Naive thymus-derived CD4-positive, alpha-beta T cell (primary cell): ENCODE measurements at regions of chr2 and their contacts with region 1.

Region 1: GRCh38 chr2:64730551-64731262 is 77.0 kb upstream of the SERTAD2 start:
- DNase-seq: peak in 8 of 9 donors; percentile 41 to 72 (median 51)
- ATAC-seq: peak; percentile 80
- H3K4me3 ChIP-seq: peak overlapping the region; percentile 66
- H3K4me3 Mint-ChIP-seq: peak overlapping the region; percentile 80 to 95 (median 88)
- H3K27ac ChIP-seq: peak overlapping the region; percentile 71
- H3K27ac Mint-ChIP-seq: peak overlapping the region; percentile 95 to 99 (median 98)
- H3K4me1 ChIP-seq: peaks cover 31 to 32% of the 10 kb centered on the region in 2 donors
- H3K4me1 Mint-ChIP-seq: peaks cover 26 to 80% (median 71%) of the 10 kb centered on the region in 7 donors
- H3K27me3 ChIP-seq: no peaks in the 10 kb centered on the region
- H3K27me3 Mint-ChIP-seq: no peaks in the 10 kb centered on the region

Region 2: GRCh38 chr2:64666810-64667438 is 63.8 kb before region 1 on chr2:
- CTCF ChIA-PET with region 1: interaction called, 6 read pairs
- POLR2A ChIA-PET with region 1: interaction called, 29 read pairs
- intact Hi-C with region 1: no loop called
- DNase-seq: peak in 3 of 9 donors; percentile 43 to 51 (median 51)
- ATAC-seq: peak; percentile 61
- H3K4me3 ChIP-seq: peak overlapping the region; percentile 12
- H3K4me3 Mint-ChIP-seq: peak overlapping the region in 9 of 10 donors; percentile 3 to 76 (median 64)
- H3K27ac ChIP-seq: peak overlapping the region; percentile 58
- H3K27ac Mint-ChIP-seq: peak overlapping the region in 3 of 9 donors; percentile 71 to 91 (median 85)
- H3K4me1 ChIP-seq: peaks cover 15 to 55% of the 10 kb centered on the region in 2 donors
- H3K4me1 Mint-ChIP-seq: peaks cover 28 to 46% (median 35%) of the 10 kb centered on the region in 7 donors
- H3K27me3 ChIP-seq: no peaks in the 10 kb centered on the region
- H3K27me3 Mint-ChIP-seq: no peaks in the 10 kb centered on the region

Region 3: GRCh38 chr2:64698668-64699444 is 31.9 kb before region 1 on chr2:
- CTCF ChIA-PET with region 1: no interaction called
- POLR2A ChIA-PET with region 1: interaction called, 10 read pairs
- intact Hi-C with region 1: loop called in 1 of 2 experiments (anchors 1 kb)
- DNase-seq: no peak
- ATAC-seq: peak; percentile 76
- H3K4me3 ChIP-seq: no peak overlapping the region
- H3K4me3 Mint-ChIP-seq: peak overlapping the region in 1 of 10 donors; percentile 80
- H3K27ac ChIP-seq: no peak overlapping the region
- H3K27ac Mint-ChIP-seq: peak overlapping the region in 4 of 9 donors; percentile 2 to 79 (median 36)
- H3K4me1 ChIP-seq: peaks cover 8 to 12% of the 10 kb centered on the region in 2 donors
- H3K4me1 Mint-ChIP-seq: peaks cover 21 to 59% (median 41%) of the 10 kb centered on the region in 7 donors
- H3K27me3 ChIP-seq: no peaks in the 10 kb centered on the region
- H3K27me3 Mint-ChIP-seq: no peaks in the 10 kb centered on the region

Region 4: DNA sequence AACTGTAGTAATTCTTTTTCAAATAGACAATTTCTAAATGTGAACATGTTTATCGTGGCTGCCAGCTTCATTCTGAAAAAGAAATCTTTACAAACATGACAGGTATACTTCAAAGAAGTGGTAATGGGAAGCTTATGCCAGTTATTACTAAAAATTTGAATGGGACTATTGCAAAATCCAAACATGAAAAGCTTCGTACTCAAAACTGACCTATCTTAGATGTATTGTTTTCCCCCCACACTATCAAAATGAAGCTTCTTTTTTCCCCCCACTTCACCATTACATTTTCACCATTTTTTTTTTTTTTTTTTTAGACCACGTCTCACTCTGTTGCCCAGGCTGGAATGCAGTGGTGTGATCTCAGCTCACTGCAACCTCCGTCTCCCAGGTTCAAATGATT is 26.5 kb before region 1 on chr2:
- CTCF ChIA-PET with region 1: no interaction called
- POLR2A ChIA-PET with region 1: interaction called, 10 read pairs
- intact Hi-C with region 1: no loop called
- DNase-seq: no peak
- ATAC-seq: no peak
- H3K4me3 ChIP-seq: no peak overlapping the region
- H3K4me3 Mint-ChIP-seq: no peak overlapping the region
- H3K27ac ChIP-seq: no peak overlapping the region
- H3K27ac Mint-ChIP-seq: no peak overlapping the region
- H3K4me1 ChIP-seq: peaks cover 0 to 5% of the 10 kb centered on the region in 2 donors
- H3K4me1 Mint-ChIP-seq: peaks cover 9 to 24% (median 12%) of the 10 kb centered on the region in 7 donors
- H3K27me3 ChIP-seq: no peaks in the 10 kb centered on the region
- H3K27me3 Mint-ChIP-seq: no peaks in the 10 kb centered on the region

Region 5: DNA sequence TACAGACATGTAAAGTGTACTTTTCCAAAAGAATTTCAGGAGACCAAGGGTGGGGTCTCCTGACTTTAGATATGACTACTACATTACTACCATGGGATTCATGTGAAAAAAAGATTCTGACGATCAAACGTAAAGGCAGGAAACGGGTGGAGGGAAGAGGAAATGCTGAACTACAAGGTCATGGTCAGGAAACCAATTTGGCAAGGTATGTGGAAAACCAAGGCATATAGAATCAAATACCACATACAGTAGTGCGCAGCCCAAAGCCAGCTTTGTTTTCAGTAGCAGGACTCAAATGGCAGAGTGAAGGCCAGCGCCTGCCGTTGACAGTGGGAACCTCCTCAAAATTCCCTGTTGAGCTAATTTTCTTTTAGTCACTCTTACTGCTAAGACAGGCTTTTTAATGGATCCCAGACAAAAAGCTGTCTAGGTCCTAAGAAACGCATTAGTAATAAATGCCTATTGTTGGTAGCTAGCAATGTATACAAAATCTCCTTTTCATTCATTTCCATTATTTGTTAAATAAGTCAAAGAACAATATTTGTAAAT is 19.4 kb before region 1 on chr2:
- CTCF ChIA-PET with region 1: interaction called, 4 read pairs
- POLR2A ChIA-PET with region 1: interaction called, 16 read pairs
- intact Hi-C with region 1: no loop called
- DNase-seq: peak in 5 of 9 donors; percentile 3 to 19 (median 12)
- ATAC-seq: no peak
- H3K4me3 ChIP-seq: no peak overlapping the region
- H3K4me3 Mint-ChIP-seq: peak overlapping the region; percentile 22 to 80 (median 68)
- H3K27ac ChIP-seq: no peak overlapping the region
- H3K27ac Mint-ChIP-seq: peak overlapping the region in 6 of 9 donors; percentile 5 to 76 (median 12)
- H3K4me1 ChIP-seq: peaks cover 5 to 15% of the 10 kb centered on the region in 2 donors
- H3K4me1 Mint-ChIP-seq: peaks cover 17 to 33% (median 19%) of the 10 kb centered on the region in 7 donors
- H3K27me3 ChIP-seq: no peaks in the 10 kb centered on the region
- H3K27me3 Mint-ChIP-seq: no peaks in the 10 kb centered on the region

Region 6: DNA sequence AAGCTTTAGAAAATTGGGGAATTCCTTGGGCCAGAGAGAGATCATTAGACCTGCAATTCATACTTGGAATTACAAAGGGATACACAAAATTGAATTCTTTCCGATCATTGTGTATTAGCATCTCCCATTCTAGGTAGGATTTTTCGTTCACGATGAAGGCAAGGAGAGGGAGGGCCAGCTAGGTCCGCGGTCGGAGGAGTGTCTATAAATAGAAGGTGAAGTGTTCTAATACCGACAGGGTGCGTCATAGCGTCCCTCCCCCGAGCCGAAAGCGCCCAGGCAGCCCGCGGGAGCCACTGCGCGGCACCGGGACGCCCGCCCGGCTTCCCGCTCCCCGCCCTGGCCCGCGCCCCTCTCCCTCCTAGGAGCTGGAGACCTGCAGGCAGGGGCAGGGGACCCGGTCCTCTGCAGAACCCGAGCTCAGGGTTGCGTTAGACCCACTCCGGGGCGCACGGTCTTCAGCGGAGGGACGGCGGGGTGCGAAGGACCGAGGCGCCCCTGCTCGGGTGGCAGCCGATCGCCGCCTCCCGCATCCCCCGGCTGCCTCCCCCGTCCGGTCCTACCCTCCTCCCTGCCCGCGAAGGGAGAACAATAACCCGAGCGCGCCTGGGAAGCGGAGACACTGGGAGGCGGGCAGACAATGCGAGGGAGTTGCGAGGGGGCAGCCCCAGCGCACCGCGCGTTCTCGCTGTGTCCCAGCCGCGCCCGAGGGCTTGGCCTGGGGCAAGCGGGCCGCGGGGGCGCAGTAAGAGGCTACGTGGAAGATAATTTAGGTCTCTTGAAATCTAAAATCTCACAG is 37.2 kb after region 1 on chr2:
- CTCF ChIA-PET with region 1: interaction called, 3 read pairs
- POLR2A ChIA-PET with region 1: interaction called, 4 read pairs
- intact Hi-C with region 1: loop called (anchors 1 kb)
- DNase-seq: peak; percentile 35 to 78 (median 55)
- ATAC-seq: peak; percentile 89
- H3K4me3 ChIP-seq: peak overlapping the region; percentile 80
- H3K4me3 Mint-ChIP-seq: peak overlapping the region; percentile 90 to 99 (median 96)
- H3K27ac ChIP-seq: peak overlapping the region; percentile 73
- H3K27ac Mint-ChIP-seq: peak overlapping the region; percentile 92 to 97 (median 95)
- H3K4me1 ChIP-seq: peaks cover 3 to 12% of the 10 kb centered on the region in 2 donors
- H3K4me1 Mint-ChIP-seq: peaks cover 9 to 40% (median 23%) of the 10 kb centered on the region in 7 donors
- H3K27me3 ChIP-seq: no peaks in the 10 kb centered on the region
- H3K27me3 Mint-ChIP-seq: peaks cover 0 to 15% (median 0%) of the 10 kb centered on the region in 5 donors

Region 7: GRCh38 chr2:65031341-65032018 is 300.8 kb after region 1 on chr2:
- CTCF ChIA-PET with region 1: no interaction called
- POLR2A ChIA-PET with region 1: no interaction called
- intact Hi-C with region 1: no loop called
- DNase-seq: peak in 6 of 9 donors; percentile 22 to 33 (median 28)
- ATAC-seq: peak; percentile 46
- H3K4me3 ChIP-seq: peak overlapping the region; percentile 12
- H3K4me3 Mint-ChIP-seq: peak overlapping the region; percentile 36 to 80 (median 73)
- H3K27ac ChIP-seq: peak overlapping the region; percentile 65
- H3K27ac Mint-ChIP-seq: peak overlapping the region in 8 of 9 donors; percentile 72 to 94 (median 84)
- H3K4me1 ChIP-seq: peaks cover 17 to 23% of the 10 kb centered on the region in 2 donors
- H3K4me1 Mint-ChIP-seq: peaks cover 23 to 30% (median 26%) of the 10 kb centered on the region in 7 donors
- H3K27me3 ChIP-seq: no peaks in the 10 kb centered on the region
- H3K27me3 Mint-ChIP-seq: no peaks in the 10 kb centered on the region